Mammary epithelial cell (primary cell): ENCODE measurements at regions of chr13 and their contacts with region 1.

Region 1: DNA sequence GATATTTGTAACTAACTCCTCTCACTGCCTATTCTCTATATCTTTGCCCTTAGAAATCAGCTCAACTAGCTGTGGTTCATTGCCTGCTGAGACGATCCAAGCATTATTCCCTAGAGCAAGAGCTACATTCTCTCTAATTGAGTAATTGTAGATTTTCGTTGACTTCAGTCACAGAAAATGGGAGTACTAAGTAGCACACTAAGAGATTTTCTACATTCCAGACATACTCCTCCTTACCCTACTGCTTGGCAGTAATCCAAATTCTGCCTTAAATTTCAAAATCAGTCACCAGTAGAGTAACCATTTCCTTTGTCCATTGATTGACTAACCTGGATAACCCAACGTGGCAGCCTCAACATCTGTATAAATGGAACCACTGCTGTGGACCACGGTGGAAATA is 1786.8 kb downstream of the SLITRK5 start:
- DNase-seq: peak; percentile 91
- H3K4me3 ChIP-seq: no peak overlapping the region
- H3K27ac ChIP-seq: peak overlapping the region; percentile 59
- H3K4me1 ChIP-seq: peaks cover 35% of the 10 kb centered on the region
- H3K27me3 ChIP-seq: no peaks in the 10 kb centered on the region
- CTCF ChIP-seq: no peak

Region 2: GRCh38 chr13:89550938-89551337 is 93.0 kb after region 1 on chr13:
- CTCF ChIA-PET with region 1: no interaction called
- dilution Hi-C with region 1: no loop called
- in situ Hi-C with region 1: no loop called
- intact Hi-C with region 1: loop called (anchors 5 kb)
- DNase-seq: peak; percentile 92
- H3K4me3 ChIP-seq: no peak overlapping the region
- H3K27ac ChIP-seq: peak overlapping the region; percentile 40
- H3K4me1 ChIP-seq: peaks cover 5% of the 10 kb centered on the region
- H3K27me3 ChIP-seq: no peaks in the 10 kb centered on the region
- CTCF ChIP-seq: no peak